ENCODE measurements at regions of chr11 and their contacts with region 1.

Region 1: GRCh38 chr11:60913793-60914632 is at the start of gene TMEM109:
- DNase-seq: peak; percentile 75 to 95 (median 89)
- ATAC-seq: peak; percentile 55
- H3K4me3 ChIP-seq: peak within 1 kb of the TSS; percentile 66 to 85
- H3K4me3 Mint-ChIP-seq: peak within 1 kb of the TSS; percentile 95
- H3K27ac ChIP-seq: peak within 1 kb of the TSS; percentile 77 to 91
- H3K27ac Mint-ChIP-seq: peak within 1 kb of the TSS; percentile 97
- H3K4me1 ChIP-seq: peaks cover 40% of the 10 kb centered on the region
- H3K4me1 Mint-ChIP-seq: peaks cover 77% of the 10 kb centered on the region
- H3K27me3 ChIP-seq: no peaks in the 10 kb centered on the region
- H3K27me3 Mint-ChIP-seq: no peaks in the 10 kb centered on the region
- CTCF ChIP-seq: no peak
- total RNA-seq, gene TMEM109: 46.7 to 52.2 TPM

Region 2: DNA sequence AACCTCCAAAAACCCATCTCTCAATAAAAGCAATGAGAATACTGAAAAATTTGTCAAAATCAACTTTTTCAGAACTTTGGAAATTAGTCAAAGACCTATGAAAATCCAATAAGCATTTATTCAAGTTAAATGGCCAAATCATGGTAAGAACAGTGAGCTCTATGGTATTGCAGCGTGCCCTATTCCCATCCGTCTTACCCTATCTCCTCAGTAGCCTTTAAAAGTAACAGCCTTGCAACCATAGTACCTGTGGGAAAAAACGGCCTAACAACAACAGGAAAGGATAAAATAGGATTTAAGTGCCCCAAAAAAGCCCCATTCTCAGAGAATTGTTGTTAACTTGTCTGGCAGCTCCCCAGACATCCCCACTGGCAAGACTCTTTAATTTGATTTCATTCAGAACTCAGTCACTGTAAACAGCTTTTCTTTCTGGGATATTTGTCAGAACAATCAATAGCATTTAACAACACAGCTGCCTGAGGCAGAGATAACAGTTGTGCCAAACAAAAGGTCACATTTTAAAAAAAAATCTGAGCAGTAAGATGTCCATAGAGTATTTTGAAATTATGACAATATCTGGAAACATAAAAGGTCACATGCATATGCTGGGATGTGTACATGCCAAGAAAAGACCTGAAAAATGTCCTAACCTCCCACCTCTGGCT is 233.4 kb before region 1 on chr11:
- CTCF ChIA-PET with region 1: no interaction called
- POLR2A ChIA-PET with region 1: no interaction called
- intact Hi-C with region 1: no loop called
- DNase-seq: no peak
- ATAC-seq: no peak
- H3K4me3 ChIP-seq: no peak overlapping the region
- H3K4me3 Mint-ChIP-seq: no peak overlapping the region
- H3K27ac ChIP-seq: no peak overlapping the region
- H3K27ac Mint-ChIP-seq: no peak overlapping the region
- H3K4me1 ChIP-seq: no peaks in the 10 kb centered on the region
- H3K4me1 Mint-ChIP-seq: no peaks in the 10 kb centered on the region
- H3K27me3 ChIP-seq: no peaks in the 10 kb centered on the region
- H3K27me3 Mint-ChIP-seq: peaks cover 14% of the 10 kb centered on the region
- CTCF ChIP-seq: no peak

Region 3: GRCh38 chr11:60767388-60767811 is 146.6 kb before region 1 on chr11:
- CTCF ChIA-PET with region 1: no interaction called
- POLR2A ChIA-PET with region 1: no interaction called
- intact Hi-C with region 1: no loop called
- DNase-seq: peak in 2 of 9 experiments; percentile 15 to 17
- ATAC-seq: no peak
- H3K4me3 ChIP-seq: no peak overlapping the region
- H3K4me3 Mint-ChIP-seq: no peak overlapping the region
- H3K27ac ChIP-seq: no peak overlapping the region
- H3K27ac Mint-ChIP-seq: no peak overlapping the region
- H3K4me1 ChIP-seq: no peaks in the 10 kb centered on the region
- H3K4me1 Mint-ChIP-seq: no peaks in the 10 kb centered on the region
- H3K27me3 ChIP-seq: no peaks in the 10 kb centered on the region
- H3K27me3 Mint-ChIP-seq: peaks cover 31% of the 10 kb centered on the region
- CTCF ChIP-seq: no peak

Region 4: GRCh38 chr11:60810569-60810968 is 103.4 kb before region 1 on chr11:
- CTCF ChIA-PET with region 1: no interaction called
- POLR2A ChIA-PET with region 1: no interaction called
- intact Hi-C with region 1: no loop called
- DNase-seq: no peak
- ATAC-seq: no peak
- H3K4me3 ChIP-seq: no peak overlapping the region
- H3K4me3 Mint-ChIP-seq: no peak overlapping the region
- H3K27ac ChIP-seq: no peak overlapping the region
- H3K27ac Mint-ChIP-seq: no peak overlapping the region
- H3K4me1 ChIP-seq: no peaks in the 10 kb centered on the region
- H3K4me1 Mint-ChIP-seq: no peaks in the 10 kb centered on the region
- H3K27me3 ChIP-seq: no peaks in the 10 kb centered on the region
- H3K27me3 Mint-ChIP-seq: peaks cover 4% of the 10 kb centered on the region
- CTCF ChIP-seq: no peak

Region 5: DNA sequence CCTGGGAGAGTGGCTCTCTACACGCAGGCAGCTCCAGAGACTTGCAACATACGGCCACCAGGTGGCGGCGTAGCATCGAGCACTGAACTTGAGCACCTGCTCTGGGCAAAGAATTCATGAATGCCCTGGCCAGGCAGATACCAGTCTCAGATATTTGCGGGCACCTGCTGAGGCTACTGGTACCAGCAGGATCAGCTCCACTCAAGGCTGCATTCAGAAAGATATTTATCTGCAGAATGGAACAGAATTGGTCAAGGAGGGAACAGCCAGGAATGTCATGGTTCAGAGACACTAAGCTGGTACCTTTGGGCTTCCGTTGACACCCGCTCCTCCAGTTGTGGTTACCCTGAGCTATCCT is 82.9 kb before region 1 on chr11:
- CTCF ChIA-PET with region 1: interaction called, 18 read pairs
- POLR2A ChIA-PET with region 1: interaction called, 4 read pairs
- intact Hi-C with region 1: no loop called
- DNase-seq: peak; percentile 60 to 88 (median 83)
- ATAC-seq: peak; percentile 96
- H3K4me3 ChIP-seq: peak overlapping the region in 1 of 2 experiments; percentile 12
- H3K4me3 Mint-ChIP-seq: no peak overlapping the region
- H3K27ac ChIP-seq: no peak overlapping the region
- H3K27ac Mint-ChIP-seq: no peak overlapping the region
- H3K4me1 ChIP-seq: no peaks in the 10 kb centered on the region
- H3K4me1 Mint-ChIP-seq: no peaks in the 10 kb centered on the region
- H3K27me3 ChIP-seq: no peaks in the 10 kb centered on the region
- H3K27me3 Mint-ChIP-seq: peaks cover 6% of the 10 kb centered on the region
- CTCF ChIP-seq: peak; percentile 90

Region 6: GRCh38 chr11:60924110-60924905 is 10.3 kb after region 1 on chr11 and contains the start of gene TMEM132A:
- CTCF ChIA-PET with region 1: interaction called, 9 read pairs
- POLR2A ChIA-PET with region 1: interaction called, 11 read pairs
- intact Hi-C with region 1: no loop called
- DNase-seq: peak in 4 of 9 experiments; percentile 20 to 57 (median 33)
- ATAC-seq: peak; percentile 32
- H3K4me3 ChIP-seq: peak within 1 kb of the TSS; percentile 44 to 52
- H3K4me3 Mint-ChIP-seq: peak within 1 kb of the TSS; percentile 67
- H3K27ac ChIP-seq: no peak within 1 kb of the TSS
- H3K27ac Mint-ChIP-seq: peak within 1 kb of the TSS; percentile 12
- H3K4me1 ChIP-seq: peaks cover 13% of the 10 kb centered on the region
- H3K4me1 Mint-ChIP-seq: peaks cover 16% of the 10 kb centered on the region
- H3K27me3 ChIP-seq: peaks cover 0 to 9% of the 10 kb centered on the region in 2 experiments
- H3K27me3 Mint-ChIP-seq: peaks cover 2% of the 10 kb centered on the region
- CTCF ChIP-seq: no peak
- total RNA-seq, gene TMEM132A: not detected

Region 7: DNA sequence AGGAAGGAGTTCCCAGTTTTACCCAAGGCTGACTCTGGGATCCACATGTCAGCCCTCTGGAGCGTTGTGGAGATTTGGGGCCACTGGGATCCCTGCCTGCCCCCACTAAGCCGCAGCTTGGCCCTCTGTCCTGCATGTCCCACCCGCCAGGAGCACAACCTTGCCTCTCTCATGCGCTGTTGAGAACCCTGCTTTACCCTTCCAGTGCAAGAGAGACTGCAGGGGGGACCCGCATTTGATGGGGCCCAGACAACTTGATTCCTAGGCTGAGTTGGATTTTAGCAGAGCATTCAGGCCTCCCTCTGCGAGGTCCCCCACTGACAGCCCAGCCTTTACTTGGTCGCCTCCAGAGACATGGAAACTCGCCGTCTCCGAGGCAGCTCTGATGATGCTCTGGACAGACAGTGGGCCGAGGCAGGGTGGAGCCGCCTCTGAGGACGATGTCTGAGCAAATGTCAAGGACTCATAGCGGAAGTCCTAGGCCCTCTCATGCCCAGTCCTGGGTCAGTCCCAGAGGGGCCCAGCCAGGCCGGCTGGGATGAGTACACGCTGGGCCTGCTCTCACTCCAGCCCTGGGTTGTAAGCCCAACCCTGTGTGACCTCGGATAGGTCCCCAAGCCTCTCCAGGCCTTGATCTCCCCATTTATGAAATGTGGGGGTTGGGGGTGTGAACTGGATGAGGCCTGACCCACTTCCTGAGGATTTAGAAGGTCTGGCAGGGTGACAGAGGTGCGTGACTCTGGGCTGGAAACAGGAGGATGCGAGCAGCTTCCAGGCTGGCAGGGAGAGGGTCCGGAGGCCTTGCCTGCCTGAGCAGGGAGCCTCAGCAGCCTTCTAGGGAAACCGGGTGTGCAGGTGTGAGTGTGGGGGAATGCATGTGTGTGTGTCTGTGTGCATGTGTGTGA is 188.9 kb after region 1 on chr11:
- CTCF ChIA-PET with region 1: interaction called, 5 read pairs
- POLR2A ChIA-PET with region 1: no interaction called
- intact Hi-C with region 1: loop called in 1 of 2 experiments (anchors 5 kb)
- DNase-seq: peak in 2 of 9 experiments; percentile 49 to 72
- ATAC-seq: peak; percentile 31
- H3K4me3 ChIP-seq: peak overlapping the region; percentile 87 to 91
- H3K4me3 Mint-ChIP-seq: no peak overlapping the region
- H3K27ac ChIP-seq: peak overlapping the region; percentile 90 to 93
- H3K27ac Mint-ChIP-seq: no peak overlapping the region
- H3K4me1 ChIP-seq: peaks cover 48% of the 10 kb centered on the region
- H3K4me1 Mint-ChIP-seq: peaks cover 40% of the 10 kb centered on the region
- H3K27me3 ChIP-seq: no peaks in the 10 kb centered on the region
- H3K27me3 Mint-ChIP-seq: no peaks in the 10 kb centered on the region
- CTCF ChIP-seq: no peak

Region 8: GRCh38 chr11:61161190-61162091 is 247.4 kb after region 1 on chr11 and contains the start of gene VPS37C:
- CTCF ChIA-PET with region 1: interaction called, 3 read pairs
- POLR2A ChIA-PET with region 1: interaction called, 3 read pairs
- intact Hi-C with region 1: loop called (anchors 1 to 2 kb)
- DNase-seq: peak; percentile 85 to 97 (median 91)
- ATAC-seq: peak; percentile 73
- H3K4me3 ChIP-seq: peak within 1 kb of the TSS; percentile 63 to 65
- H3K4me3 Mint-ChIP-seq: peak within 1 kb of the TSS; percentile 87
- H3K27ac ChIP-seq: peak within 1 kb of the TSS; percentile 58 to 88
- H3K27ac Mint-ChIP-seq: peak within 1 kb of the TSS; percentile 94
- H3K4me1 ChIP-seq: peaks cover 16% of the 10 kb centered on the region
- H3K4me1 Mint-ChIP-seq: peaks cover 53% of the 10 kb centered on the region
- H3K27me3 ChIP-seq: no peaks in the 10 kb centered on the region
- H3K27me3 Mint-ChIP-seq: peaks cover 2% of the 10 kb centered on the region
- CTCF ChIP-seq: no peak
- total RNA-seq, gene VPS37C: 2.1 to 2.2 TPM

Region 9: DNA sequence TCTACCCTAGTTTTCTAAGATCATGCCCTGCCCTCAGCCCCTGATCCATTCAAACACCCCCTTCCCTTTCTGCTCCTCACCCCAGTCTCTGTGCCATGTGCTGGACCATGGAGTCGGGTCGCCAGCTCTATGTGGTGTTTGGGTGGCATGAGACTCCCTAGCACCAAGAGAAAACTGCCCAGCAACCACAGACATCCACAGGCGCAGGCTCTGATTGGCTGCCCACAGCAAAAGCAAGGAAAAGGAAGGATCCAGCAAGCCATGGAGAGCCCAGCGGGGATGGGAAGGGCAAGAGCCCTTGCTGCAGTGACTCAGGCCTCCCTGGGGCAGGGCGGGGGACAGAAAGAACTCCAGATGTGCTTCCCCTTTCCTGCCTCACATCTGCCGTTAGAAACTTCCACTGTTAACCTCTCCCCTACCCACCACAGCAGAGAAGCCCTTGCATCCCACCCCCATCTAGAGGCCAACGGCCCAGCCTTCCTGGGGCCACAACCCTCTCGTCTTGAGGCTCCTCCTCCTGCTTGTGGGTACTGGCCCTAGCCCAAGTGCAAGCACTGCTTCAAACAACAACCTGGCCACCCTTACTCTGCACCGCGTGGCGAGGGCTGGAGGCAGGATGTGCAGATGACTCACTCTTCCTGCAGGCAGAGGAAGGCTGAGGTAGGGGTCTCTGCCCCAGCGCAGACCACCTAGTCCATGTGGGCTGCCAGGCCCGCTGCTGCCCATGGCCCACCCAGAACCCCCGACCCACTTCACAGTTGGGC is 1642.3 kb after region 1 on chr11:
- CTCF ChIA-PET with region 1: no interaction called
- POLR2A ChIA-PET with region 1: no interaction called
- intact Hi-C with region 1: loop called in 1 of 2 experiments (anchors 10 kb)
- DNase-seq: peak; percentile 72 to 96 (median 90)
- ATAC-seq: peak; percentile 52
- H3K4me3 ChIP-seq: peak overlapping the region; percentile 14 to 28
- H3K4me3 Mint-ChIP-seq: peak overlapping the region; percentile 77
- H3K27ac ChIP-seq: peak overlapping the region; percentile 86 to 92
- H3K27ac Mint-ChIP-seq: peak overlapping the region; percentile 97
- H3K4me1 ChIP-seq: peaks cover 87% of the 10 kb centered on the region
- H3K4me1 Mint-ChIP-seq: peaks cover 86% of the 10 kb centered on the region
- H3K27me3 ChIP-seq: no peaks in the 10 kb centered on the region
- H3K27me3 Mint-ChIP-seq: no peaks in the 10 kb centered on the region
- CTCF ChIP-seq: no peak

Measured in CD8-positive, alpha-beta T cell (primary cell).